WTC11 (cell line): ENCODE measurements at regions of chr7 and their contacts with region 1.

Region 1: GRCh38 chr7:88344956-88345832 is 38.5 kb upstream of the STEAP4 start:
- DNase-seq: peak; percentile 67
- ATAC-seq: peak; percentile 97
- H3K4me3 Mint-ChIP-seq: no peak overlapping the region
- H3K27ac Mint-ChIP-seq: no peak overlapping the region
- H3K4me1 Mint-ChIP-seq: peaks cover 30% of the 10 kb centered on the region
- H3K27me3 Mint-ChIP-seq: no peaks in the 10 kb centered on the region
- CTCF ChIP-seq: no peak

Region 2: GRCh38 chr7:88357781-88358525 is 12.8 kb after region 1 on chr7:
- CTCF ChIA-PET with region 1: interaction called, 13 read pairs
- POLR2A ChIA-PET with region 1: no interaction called
- DNase-seq: no peak
- ATAC-seq: peak; percentile 34; the same call in 1 of the 2 replicates
- H3K4me3 Mint-ChIP-seq: no peak overlapping the region
- H3K27ac Mint-ChIP-seq: no peak overlapping the region
- H3K4me1 Mint-ChIP-seq: peaks cover 13% of the 10 kb centered on the region
- H3K27me3 Mint-ChIP-seq: no peaks in the 10 kb centered on the region
- CTCF ChIP-seq: no peak

Region 3: DNA sequence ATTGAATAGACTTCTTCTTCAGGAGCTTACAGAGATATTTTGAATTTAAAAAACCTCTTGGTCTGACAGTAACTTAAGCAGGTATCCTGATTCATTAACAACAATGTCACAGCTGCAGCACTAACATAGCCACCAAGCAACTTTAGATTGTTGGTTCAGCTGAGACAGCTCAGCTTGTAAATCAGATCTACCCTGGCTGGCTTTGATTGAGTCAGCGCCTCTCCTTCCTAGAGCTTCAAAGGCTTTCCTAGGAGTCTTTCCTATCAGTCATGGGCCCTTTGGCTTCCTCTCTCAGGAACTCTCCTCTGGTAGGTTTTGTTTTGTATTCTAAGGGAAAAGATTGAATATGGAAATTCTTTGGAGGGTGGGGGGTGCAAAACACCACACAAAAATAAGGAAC is 32.2 kb after region 1 on chr7:
- CTCF ChIA-PET with region 1: interaction called, 13 read pairs
- POLR2A ChIA-PET with region 1: no interaction called
- DNase-seq: peak; percentile 34
- ATAC-seq: peak; percentile 99
- H3K4me3 Mint-ChIP-seq: peak overlapping the region; percentile 42
- H3K27ac Mint-ChIP-seq: peak overlapping the region; percentile 94
- H3K4me1 Mint-ChIP-seq: peaks cover 44% of the 10 kb centered on the region
- H3K27me3 Mint-ChIP-seq: no peaks in the 10 kb centered on the region
- CTCF ChIP-seq: no peak